ENCODE measurements at regions of chr12 and their contacts with region 1.

Region 1: DNA sequence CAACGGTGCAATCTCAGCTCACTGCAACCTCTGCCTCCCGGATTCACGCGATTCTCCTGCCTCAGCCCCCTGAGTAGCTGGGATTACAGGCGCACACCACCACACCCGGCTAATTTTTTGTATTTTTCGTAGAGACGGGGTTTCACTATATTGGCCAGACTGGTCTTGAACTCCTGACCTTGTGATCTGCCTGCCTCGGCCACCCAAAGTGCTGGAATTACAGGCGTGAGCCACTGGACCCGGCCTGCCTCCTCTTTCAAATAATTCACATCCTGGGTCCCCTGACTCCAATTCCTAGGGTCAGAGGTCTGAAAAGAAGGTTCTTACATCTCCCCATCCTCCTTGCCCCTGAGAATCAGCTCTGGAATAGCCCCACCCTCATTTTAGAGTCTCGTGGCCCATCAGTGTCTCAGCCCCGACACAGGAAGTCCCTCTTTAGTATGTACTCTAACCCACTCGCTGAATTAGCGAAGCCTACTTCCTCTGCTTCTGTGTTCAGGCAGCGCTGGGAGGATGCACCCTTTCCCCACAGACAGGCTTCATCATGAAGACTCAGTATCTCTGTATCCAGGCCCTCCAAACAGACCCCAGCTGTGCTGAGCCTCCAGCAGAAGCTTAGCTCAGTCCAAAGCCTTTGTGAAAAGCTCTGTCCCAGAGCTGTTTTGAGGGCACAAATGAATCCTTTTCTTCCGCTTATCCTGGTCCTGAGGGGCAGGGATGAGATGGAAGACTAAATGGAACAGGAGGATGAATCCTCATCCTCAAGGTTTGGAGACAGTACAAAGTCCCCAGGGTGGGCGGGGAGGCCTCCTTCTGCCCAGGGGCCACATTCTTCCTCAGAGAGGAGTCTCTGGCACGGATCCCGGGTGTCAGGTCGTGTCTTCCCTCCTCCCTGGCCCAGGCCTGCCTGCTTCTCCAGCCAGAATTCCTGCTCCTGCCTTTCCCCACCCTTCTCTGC is 3.5 kb downstream of the LPAR5 start:
- DNase-seq: peak; percentile 96
- H3K4me3 ChIP-seq: peak overlapping the region; percentile 68
- H3K27ac ChIP-seq: peak overlapping the region; percentile 97
- H3K4me1 ChIP-seq: peaks cover 87% of the 10 kb centered on the region
- CTCF ChIP-seq: no peak

Region 2: DNA sequence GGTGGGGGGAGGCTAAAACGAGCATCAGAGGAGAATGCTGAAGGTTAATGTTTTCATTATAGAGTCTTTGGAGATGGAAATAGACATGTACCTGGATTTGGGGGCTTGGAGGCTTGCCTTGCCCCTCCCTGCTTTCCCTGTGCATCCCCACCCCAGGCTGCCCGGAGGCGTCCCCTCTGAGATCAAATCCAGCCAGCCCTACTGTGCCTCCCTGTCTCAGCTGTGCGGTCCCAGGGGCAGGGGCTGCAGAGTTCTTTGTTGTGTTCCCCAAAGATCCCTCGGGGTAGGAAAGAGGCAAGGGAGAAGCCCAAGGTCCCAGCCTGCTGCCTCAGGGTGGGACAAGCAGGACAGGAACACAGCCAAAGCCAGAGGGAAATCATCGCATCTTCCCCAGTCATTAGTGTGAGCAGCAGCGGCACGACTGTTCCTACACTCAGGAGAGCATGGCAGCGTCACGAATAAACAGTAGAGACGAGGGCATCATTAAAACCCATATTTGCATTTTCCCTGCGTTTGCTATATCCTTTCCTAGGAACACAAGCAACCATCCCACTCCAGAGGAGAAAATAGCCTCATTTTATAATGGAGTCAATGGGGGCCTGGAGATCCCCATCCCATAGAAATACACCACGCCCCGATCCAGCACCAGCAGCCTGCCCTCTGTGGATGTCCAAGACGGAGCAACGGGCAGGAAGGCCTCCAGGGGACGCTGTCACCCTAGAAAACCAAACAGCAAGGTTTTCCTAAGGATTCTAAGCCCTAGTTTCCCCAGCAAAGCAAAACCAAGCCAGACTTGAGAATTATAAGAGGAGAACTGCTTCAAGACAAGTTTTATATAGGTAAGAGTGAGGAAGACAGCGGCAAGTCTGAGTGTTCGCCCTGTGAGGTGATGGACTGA is 719.6 kb before region 1 on chr12:
- CTCF ChIA-PET with region 1: no interaction called
- POLR2A ChIA-PET with region 1: no interaction called
- intact Hi-C with region 1: no loop called
- DNase-seq: no peak
- H3K4me3 ChIP-seq: no peak overlapping the region
- H3K27ac ChIP-seq: no peak overlapping the region
- H3K4me1 ChIP-seq: no peaks in the 10 kb centered on the region
- CTCF ChIP-seq: peak; percentile 57

Region 3: DNA sequence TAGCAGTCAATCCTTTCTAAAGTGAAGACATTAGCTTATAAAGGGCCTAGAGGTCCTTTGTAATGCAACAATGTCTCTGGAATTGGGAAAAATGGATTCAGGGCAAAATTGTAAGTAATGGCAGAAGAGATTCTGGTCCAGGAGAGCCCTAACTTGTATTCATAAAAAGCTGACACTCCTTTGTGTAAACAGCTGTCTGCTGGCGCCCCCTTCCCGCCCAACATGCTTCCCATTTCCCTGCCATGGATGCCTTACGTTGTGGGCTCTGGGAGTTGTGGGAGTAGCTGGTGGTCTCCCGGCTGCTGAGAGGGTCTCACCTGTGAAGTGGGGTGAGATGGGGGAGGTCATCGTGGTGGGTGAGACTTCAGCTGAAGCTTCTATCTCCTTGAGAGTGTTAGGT is 12.6 kb after region 1 on chr12:
- CTCF ChIA-PET with region 1: interaction called, 7 read pairs
- POLR2A ChIA-PET with region 1: interaction called, 24 read pairs
- intact Hi-C with region 1: no loop called
- DNase-seq: no peak
- H3K4me3 ChIP-seq: peak overlapping the region; percentile 51
- H3K27ac ChIP-seq: peak overlapping the region; percentile 83
- H3K4me1 ChIP-seq: peaks cover 36% of the 10 kb centered on the region
- CTCF ChIP-seq: peak; percentile 70

Region 4: DNA sequence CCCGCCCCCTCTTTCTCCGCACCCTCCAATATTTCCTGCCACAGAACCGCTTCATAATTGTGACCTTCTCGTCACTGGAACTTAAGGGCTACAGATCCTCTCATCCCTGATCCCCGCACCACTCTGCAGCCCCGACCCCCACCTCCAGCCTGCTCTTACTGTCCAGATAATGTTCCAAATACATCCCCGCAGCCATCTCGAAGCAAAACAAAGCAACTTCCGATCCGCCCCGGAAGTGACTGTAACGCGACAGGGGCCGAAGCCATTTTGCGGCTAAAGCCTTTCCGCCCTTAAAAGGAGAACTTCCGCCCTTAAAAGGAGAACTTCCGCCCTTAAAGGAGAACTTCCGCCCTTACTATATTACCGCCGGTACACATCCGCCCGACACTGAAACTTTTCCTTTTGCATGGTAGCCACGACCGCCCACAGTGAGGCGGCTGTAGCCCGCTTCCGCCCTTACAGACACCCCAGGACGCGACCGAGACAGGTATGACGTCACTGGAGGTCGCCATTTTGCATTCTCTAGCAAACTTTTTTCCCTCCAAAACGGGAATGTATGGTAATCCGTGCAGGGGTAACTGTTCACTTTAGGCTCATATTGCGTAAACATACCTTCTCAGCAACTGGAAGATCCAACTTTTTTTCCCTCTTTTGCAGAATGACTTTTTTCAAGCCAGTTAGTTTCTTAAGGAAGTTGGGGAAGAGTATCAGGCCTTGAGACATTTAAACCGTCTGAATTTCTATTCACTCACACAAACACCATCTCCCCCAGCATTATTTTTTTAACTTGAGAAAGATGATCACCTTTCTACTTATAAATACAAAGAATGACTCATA is 30.8 kb after region 1 on chr12 and contains the start of gene ING4:
- CTCF ChIA-PET with region 1: interaction called, 4 read pairs
- POLR2A ChIA-PET with region 1: interaction called, 6 read pairs
- intact Hi-C with region 1: loop called (anchors 2 kb)
- DNase-seq: peak; percentile 100
- H3K4me3 ChIP-seq: peak within 1 kb of the TSS; percentile 79
- H3K27ac ChIP-seq: peak within 1 kb of the TSS; percentile 67
- H3K4me1 ChIP-seq: peaks cover 19% of the 10 kb centered on the region
- CTCF ChIP-seq: no peak
- total RNA-seq, gene ING4: 27.1 and 38.1 TPM in 2 replicates

Measured in OCI-LY7 (cell line).